Transverse colon (tissue), 4 donors: ENCODE measurements at regions of chr12 and their contacts with region 1.

Region 1: GRCh38 chr12:114025935-114026334 is 59.8 kb upstream of the RBM19 start:
- DNase-seq: no peak
- H3K4me3 ChIP-seq: no peak overlapping the region
- H3K27ac ChIP-seq: no peak overlapping the region
- H3K4me1 ChIP-seq: no peaks in the 10 kb centered on the region
- H3K27me3 ChIP-seq: peaks cover 13% of the 10 kb centered on the region
- CTCF ChIP-seq: no peak
- EP300 ChIP-seq: no peak
- POLR2A ChIP-seq: no peak

Region 2: GRCh38 chr12:112482733-112483132 is 1543.2 kb before region 1 on chr12:
- in situ Hi-C with region 1: no loop called
- intact Hi-C with region 1: no loop called
- DNase-seq: no peak
- H3K4me3 ChIP-seq: no peak overlapping the region
- H3K27ac ChIP-seq: no peak overlapping the region
- H3K4me1 ChIP-seq: no peaks in the 10 kb centered on the region
- H3K27me3 ChIP-seq: no peaks in the 10 kb centered on the region
- CTCF ChIP-seq: no peak
- EP300 ChIP-seq: no peak
- POLR2A ChIP-seq: no peak

Region 3: DNA sequence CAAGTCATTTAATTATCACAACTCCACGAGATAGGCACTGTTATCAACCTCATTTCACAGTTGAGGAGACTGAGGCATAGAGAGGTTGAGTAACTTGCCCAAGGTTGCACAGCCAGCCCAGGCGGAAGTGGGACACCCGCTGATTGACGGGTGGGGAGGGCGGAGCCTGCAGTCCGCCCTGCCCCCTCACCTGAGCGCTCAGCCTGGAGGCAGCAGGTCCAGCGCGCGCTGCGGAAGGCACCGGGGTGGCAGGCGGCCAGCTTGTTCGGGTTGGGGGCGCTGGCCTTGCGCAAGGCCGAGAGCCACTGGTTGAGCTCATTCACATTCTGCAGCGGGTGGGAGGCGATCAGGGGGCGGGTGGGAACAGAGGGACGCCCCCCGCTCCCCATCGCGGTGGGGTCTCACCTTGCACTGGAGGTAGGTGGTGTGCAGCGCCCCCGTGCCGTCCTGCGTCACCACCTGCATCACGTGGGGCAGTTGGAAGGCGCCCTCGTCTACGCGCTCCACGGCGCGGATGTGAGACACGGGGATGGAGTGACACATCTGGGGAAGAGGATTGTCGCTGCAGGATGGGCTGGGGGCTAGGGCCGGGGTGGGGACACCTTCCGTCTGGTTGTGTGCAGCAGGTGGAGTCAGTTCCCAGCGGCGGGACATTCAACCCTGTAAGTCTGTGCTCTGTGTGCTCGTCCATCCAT is 922.0 kb before region 1 on chr12:
- in situ Hi-C with region 1: no loop called
- intact Hi-C with region 1: loop called (anchors 5 kb)
- DNase-seq: peak; percentile 32
- H3K4me3 ChIP-seq: peak overlapping the region in 1 of 4 donors; percentile 16
- H3K27ac ChIP-seq: no peak overlapping the region
- H3K4me1 ChIP-seq: peaks cover 0 to 5% (median 0%) of the 10 kb centered on the region in 4 donors
- H3K27me3 ChIP-seq: peaks cover 9% of the 10 kb centered on the region
- CTCF ChIP-seq: no peak
- EP300 ChIP-seq: no peak
- POLR2A ChIP-seq: no peak

Region 4: GRCh38 chr12:113486722-113487121 is 539.2 kb before region 1 on chr12:
- in situ Hi-C with region 1: no loop called
- intact Hi-C with region 1: no loop called
- DNase-seq: no peak
- H3K4me3 ChIP-seq: no peak overlapping the region
- H3K27ac ChIP-seq: no peak overlapping the region
- H3K4me1 ChIP-seq: no peaks in the 10 kb centered on the region
- H3K27me3 ChIP-seq: peaks cover 45% of the 10 kb centered on the region
- CTCF ChIP-seq: no peak
- EP300 ChIP-seq: no peak
- POLR2A ChIP-seq: no peak

Region 5: DNA sequence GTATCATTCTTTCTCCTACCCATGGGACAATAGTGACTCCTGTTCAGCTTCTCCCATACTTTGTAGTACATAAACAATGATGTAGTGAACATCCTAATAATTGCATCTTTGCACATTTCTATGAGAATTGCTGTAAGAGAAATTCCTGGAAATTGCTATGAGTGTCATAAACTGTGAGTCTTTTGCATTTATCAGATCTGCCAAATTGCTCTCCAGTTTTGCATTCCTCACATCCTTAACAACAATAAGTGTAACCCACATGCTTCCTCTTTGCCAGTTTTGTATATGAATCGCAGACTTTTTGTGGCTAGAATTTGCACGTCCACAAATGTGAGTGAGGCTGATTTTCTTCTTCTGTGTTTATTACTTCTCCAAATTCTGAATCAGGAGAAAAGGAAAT is 504.0 kb after region 1 on chr12:
- in situ Hi-C with region 1: no loop called
- intact Hi-C with region 1: no loop called
- DNase-seq: no peak
- H3K4me3 ChIP-seq: no peak overlapping the region
- H3K27ac ChIP-seq: no peak overlapping the region
- H3K4me1 ChIP-seq: no peaks in the 10 kb centered on the region
- H3K27me3 ChIP-seq: peaks cover 5% of the 10 kb centered on the region
- CTCF ChIP-seq: no peak
- EP300 ChIP-seq: no peak
- POLR2A ChIP-seq: no peak